PC-9 (cell line): ENCODE measurements at regions of chr2 and their contacts with region 1.

Region 1: DNA sequence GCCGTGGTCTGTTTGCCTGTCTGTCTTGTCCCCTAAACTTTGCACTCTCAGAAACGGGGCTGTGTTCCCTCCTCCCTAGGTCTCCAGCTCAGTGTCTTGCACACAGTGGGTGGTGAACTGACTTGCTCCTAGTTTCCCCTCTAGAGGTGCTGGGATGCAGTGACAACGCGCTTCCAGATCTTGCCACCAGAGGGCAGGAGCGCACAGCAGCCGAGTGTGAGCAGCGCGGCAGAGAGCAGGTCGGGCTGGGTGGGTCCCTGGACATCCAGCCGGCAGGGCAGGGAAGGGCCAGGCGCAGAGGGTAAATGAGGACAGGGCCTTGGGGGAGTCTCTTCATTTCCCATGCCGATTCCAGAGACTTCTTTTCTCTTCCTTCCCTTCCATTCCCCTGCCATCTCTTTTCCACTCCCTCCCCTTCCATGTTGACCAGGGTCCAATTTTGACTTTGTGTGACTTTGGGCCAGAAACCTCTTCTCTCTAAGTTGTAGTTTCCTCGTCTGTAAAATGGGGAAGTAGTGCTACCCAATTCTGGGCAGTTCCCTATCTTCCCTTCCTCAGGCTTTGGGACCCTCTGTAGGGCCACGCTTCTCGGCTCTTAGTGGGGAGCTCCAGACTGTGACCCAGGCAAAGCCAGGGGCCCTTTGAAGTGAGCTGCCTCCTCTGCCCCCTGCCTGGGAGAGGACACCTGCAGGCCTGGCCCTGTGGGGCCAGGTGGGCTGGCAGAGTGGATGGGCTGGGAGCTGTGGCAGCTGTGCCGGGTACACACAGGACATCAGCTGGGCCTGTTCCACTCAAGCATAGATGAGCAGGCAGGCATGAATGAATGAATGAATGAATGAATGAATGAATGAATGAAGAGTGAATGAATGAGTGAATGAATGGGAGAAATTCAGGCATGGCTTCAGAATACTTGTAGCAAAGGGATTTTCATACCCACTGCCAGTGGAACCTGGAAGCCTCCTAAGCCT is 43.3 kb upstream of the TAF1B start:
- DNase-seq: peak; percentile 83 to 89
- H3K4me3 ChIP-seq: peak overlapping the region; percentile 46; the same call in 1 of the 2 replicates
- H3K27ac ChIP-seq: peak overlapping the region; percentile 95
- H3K4me1 ChIP-seq: peaks cover 86% of the 10 kb centered on the region
- H3K27me3 ChIP-seq: no peaks in the 10 kb centered on the region
- CTCF ChIP-seq: peak; percentile 99

Region 2: DNA sequence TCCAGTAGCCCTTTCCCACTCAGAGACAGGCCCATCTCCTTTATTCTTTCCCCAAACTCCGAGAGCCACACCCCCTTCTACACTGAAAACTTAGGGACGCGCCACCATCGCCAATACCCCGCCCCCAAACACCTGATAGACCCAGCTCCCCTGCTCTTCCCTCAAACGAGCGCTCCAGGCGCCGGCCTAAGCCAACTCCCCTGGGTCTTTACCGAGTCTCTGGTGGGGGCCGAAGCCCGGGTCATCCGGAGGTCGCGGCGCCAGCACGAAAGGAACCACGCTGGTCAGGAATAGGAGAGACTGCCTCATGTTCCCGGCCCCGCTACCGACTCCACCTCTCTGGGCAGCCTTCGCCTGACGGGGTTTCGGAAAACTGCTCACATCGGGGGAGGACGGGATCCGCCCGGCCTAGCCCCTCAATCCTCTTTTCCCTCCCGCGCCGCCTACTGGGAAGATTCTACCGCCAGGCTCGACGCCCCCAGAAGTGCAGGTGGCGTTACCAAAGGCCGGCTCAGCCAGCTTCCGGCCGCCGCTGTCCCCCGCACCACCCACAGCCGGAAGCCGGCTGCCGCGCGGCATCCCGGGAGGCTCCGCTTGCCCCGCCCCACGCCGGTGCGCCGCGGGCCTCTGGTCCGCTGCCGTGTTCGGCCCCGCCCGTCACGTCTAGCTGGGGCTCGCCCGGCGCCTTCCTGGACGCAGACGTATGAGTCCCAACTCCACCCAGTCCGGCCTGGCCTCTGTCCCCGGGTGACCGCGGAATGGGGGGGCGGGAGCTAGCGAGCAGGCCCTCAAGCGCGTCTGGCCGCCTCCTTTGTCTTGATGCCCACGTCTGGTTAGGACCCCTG is 244.4 kb before region 1 on chr2 and contains the start of gene ADAM17:
- CTCF ChIA-PET with region 1: no interaction called
- POLR2A ChIA-PET with region 1: no interaction called
- intact Hi-C with region 1: loop called (anchors 5 kb)
- DNase-seq: peak; percentile 90 to 96
- H3K4me3 ChIP-seq: peak within 1 kb of the TSS; percentile 83
- H3K27ac ChIP-seq: peak within 1 kb of the TSS; percentile 96
- H3K4me1 ChIP-seq: peaks cover 74% of the 10 kb centered on the region
- H3K27me3 ChIP-seq: no peaks in the 10 kb centered on the region
- CTCF ChIP-seq: peak; percentile 35; the same call in 1 of the 2 replicates
- total RNA-seq, gene ADAM17: 53.5 and 65.0 TPM in 2 replicates

Region 3: DNA sequence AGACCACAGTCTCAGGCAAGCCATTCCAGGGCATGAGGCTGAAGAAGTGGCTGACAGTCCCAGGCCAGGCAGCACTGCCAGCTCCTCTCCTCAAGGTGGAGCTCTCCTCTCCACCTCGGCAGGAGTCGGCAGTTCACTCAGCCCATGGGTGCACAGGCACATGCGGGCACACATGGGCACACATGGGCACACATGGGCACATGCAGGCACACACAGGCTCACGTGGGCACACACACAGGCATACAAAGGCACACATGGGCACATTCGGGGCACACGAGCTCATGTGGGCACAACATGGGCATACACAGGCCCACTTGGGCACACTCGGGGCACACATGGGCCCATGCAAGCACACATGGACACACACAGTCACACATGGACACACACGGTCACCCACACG is 21.9 kb before region 1 on chr2:
- CTCF ChIA-PET with region 1: no interaction called
- POLR2A ChIA-PET with region 1: no interaction called
- intact Hi-C with region 1: loop called (anchors 1 kb)
- DNase-seq: no peak
- H3K4me3 ChIP-seq: no peak overlapping the region
- H3K27ac ChIP-seq: no peak overlapping the region
- H3K4me1 ChIP-seq: peaks cover 19% of the 10 kb centered on the region
- H3K27me3 ChIP-seq: no peaks in the 10 kb centered on the region
- CTCF ChIP-seq: peak; percentile 64

Region 4: DNA sequence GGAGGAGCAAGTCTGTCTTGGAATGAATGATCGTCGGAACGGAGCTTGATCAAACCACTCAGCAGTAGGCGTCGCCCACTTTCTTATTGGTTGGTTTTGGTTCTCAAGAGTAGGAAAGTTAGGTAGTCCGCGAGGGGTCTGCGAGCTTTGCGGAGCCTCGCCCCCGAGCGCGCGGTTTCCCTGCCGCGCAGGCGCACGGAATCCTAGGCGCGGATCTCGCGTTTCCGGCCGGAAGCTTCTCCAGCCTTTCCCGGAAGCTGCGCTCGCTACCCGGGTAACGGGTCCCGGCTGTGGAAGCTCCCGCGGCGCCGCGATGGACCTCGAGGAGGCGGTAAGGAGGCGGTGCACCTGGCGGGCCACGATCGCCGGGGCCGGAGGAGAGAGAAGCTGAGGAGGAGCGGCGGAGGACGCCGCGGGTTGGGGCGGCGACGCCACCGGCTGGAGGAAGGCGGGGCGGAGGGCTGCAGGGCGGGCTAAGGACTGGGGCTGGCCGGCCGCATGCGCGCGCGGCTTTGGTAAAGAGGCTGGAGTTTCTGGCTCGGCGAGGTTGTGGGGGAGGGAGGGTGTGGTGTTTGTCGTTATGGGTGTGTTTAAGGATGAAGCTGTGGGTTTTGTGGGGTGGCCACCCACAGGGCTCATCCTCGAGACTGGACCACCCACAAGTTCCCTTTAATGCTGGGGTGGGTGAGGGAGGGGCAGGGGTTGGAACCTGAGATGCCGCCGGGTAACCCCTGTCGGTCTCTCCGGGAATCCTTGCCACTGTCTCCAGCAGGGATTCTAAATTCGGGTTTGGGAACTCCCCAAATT is 43.5 kb after region 1 on chr2 and contains the start of gene TAF1B:
- CTCF ChIA-PET with region 1: interaction called, 7 read pairs
- POLR2A ChIA-PET with region 1: interaction called, 8 read pairs
- intact Hi-C with region 1: loop called (anchors 2 kb)
- DNase-seq: peak; percentile 91 to 92
- H3K4me3 ChIP-seq: peak within 1 kb of the TSS; percentile 68
- H3K27ac ChIP-seq: peak within 1 kb of the TSS; percentile 86
- H3K4me1 ChIP-seq: peaks cover 50% of the 10 kb centered on the region
- H3K27me3 ChIP-seq: no peaks in the 10 kb centered on the region
- CTCF ChIP-seq: no peak; the same call in 1 of the 2 replicates
- total RNA-seq, gene TAF1B: 23.8 and 24.8 TPM in 2 replicates

Region 5: GRCh38 chr2:9914384-9915065 is 114.6 kb after region 1 on chr2:
- CTCF ChIA-PET with region 1: no interaction called
- POLR2A ChIA-PET with region 1: no interaction called
- intact Hi-C with region 1: loop called (anchors 1 kb)
- DNase-seq: peak; percentile 53 to 83
- H3K4me3 ChIP-seq: no peak overlapping the region
- H3K27ac ChIP-seq: peak overlapping the region; percentile 50
- H3K4me1 ChIP-seq: peaks cover 9% of the 10 kb centered on the region; the same call in 1 of the 2 replicates
- H3K27me3 ChIP-seq: no peaks in the 10 kb centered on the region
- CTCF ChIP-seq: peak; percentile 60

Region 6: DNA sequence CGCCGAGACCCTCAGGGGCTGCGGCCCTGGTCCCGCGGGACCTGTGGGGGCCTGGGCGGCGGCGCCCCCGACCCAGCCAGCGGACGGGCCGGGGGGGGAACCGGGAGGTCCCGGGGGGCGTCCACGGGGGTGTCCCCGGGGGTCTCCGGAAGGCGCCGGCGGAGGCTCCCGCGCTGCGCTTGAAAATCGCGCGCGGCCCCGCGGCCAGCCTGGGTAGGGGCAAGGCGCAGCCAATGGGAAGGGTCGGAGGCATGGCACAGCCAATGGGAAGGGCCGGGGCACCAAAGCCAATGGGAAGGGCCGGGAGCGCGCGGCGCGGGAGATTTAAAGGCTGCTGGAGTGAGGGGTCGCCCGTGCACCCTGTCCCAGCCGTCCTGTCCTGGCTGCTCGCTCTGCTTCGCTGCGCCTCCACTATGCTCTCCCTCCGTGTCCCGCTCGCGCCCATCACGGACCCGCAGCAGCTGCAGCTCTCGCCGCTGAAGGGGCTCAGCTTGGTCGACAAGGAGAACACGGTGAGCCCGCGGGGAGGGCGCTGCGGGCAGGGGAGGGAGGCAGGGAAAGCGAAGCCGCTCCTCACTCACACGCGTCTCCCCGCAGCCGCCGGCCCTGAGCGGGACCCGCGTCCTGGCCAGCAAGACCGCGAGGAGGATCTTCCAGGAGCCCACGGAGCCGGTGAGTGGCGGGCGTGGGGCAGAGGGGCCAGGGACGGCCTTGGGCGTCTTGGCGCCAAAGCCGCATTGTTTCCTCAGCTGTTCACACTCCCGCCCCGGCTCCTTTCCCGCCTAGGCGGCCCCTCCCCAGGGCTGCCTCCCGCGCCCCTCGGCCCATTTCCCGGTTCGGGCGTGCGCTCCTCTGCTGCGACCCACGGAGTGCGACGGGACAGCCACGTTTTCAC is 322.7 kb after region 1 on chr2 and contains the start of gene RRM2:
- CTCF ChIA-PET with region 1: interaction called, 4 read pairs
- POLR2A ChIA-PET with region 1: no interaction called
- intact Hi-C with region 1: loop called (anchors 5 kb)
- DNase-seq: peak; percentile 83 to 92
- H3K4me3 ChIP-seq: peak within 1 kb of the TSS; percentile 88
- H3K27ac ChIP-seq: peak within 1 kb of the TSS; percentile 93
- H3K4me1 ChIP-seq: peaks cover 34% of the 10 kb centered on the region
- H3K27me3 ChIP-seq: no peaks in the 10 kb centered on the region
- CTCF ChIP-seq: no peak
- total RNA-seq, gene RRM2: 90.4 and 105 TPM in 2 replicates